ENCODE measurements at regions of chr22 and their contacts with region 1.

Region 1: GRCh38 chr22:30375312-30375849 is 11.8 kb downstream of the RNF215 start:
- DNase-seq: no peak
- ATAC-seq: no peak
- H3K4me3 ChIP-seq: no peak overlapping the region
- H3K27ac ChIP-seq: no peak overlapping the region
- H3K4me1 ChIP-seq: no peaks in the 10 kb centered on the region; the same call in 1 of the 2 replicates
- H3K27me3 ChIP-seq: no peaks in the 10 kb centered on the region
- CTCF ChIP-seq: no peak

Region 2: GRCh38 chr22:30354644-30355043 is 20.7 kb before region 1 on chr22:
- CTCF ChIA-PET with region 1: no interaction called
- POLR2A ChIA-PET with region 1: interaction called, 10 read pairs
- in situ Hi-C with region 1: no loop called
- intact Hi-C with region 1: no loop called
- DNase-seq: no peak
- ATAC-seq: no peak
- H3K4me3 ChIP-seq: no peak overlapping the region
- H3K27ac ChIP-seq: no peak overlapping the region
- H3K4me1 ChIP-seq: peaks cover 7% of the 10 kb centered on the region; the same call in 1 of the 2 replicates
- H3K27me3 ChIP-seq: no peaks in the 10 kb centered on the region
- CTCF ChIP-seq: no peak